Heart left ventricle (tissue), 16 donors: ENCODE measurements at regions of chr1 and their contacts with region 1.

Region 1: DNA sequence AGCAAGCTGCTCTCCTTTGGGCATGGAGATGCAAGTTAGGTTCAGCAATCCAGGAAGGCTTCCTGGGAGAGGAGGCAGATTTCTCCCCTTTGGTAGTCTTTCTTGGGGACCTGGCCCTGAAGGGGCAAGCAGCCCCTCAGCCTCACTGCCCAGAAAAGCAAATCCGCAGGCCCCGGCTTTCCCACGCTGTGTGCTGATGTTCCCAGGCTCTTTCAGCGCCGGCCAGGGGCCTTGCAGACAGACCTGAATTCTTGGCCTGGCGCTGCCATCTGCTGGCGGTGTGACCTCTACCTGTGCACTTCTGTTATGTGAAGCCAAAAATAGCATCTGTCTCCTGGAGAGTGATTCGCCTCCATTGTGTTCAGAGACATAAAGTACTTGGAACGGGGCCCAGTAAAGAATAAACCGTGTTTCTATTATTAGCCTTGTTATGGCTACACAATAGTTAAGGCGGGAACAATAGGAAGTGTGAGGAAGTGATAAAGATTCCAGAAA is 64.8 kb downstream of the ALPL start:
- DNase-seq: peak; percentile 85 to 92 (median 90)
- ATAC-seq: peak; percentile 89 to 94 (median 92)
- H3K4me3 ChIP-seq: peak overlapping the region in 2 of 12 donors; percentile 3 to 11
- H3K27ac ChIP-seq: peak overlapping the region; percentile 68 to 96 (median 82)
- H3K4me1 ChIP-seq: peaks cover 0 to 27% (median 21%) of the 10 kb centered on the region in 12 donors
- H3K27me3 ChIP-seq: peaks cover 0 to 4% (median 0%) of the 10 kb centered on the region in 9 donors
- CTCF ChIP-seq: peak; percentile 46 to 81 (median 66)
- POLR2A ChIP-seq: no peak

Region 2: GRCh38 chr1:21368515-21369289 is 205.3 kb before region 1 on chr1:
- intact Hi-C with region 1: loop called in 8 of 10 experiments (anchors 1 to 5 kb)
- DNase-seq: peak; percentile 80 to 88 (median 83)
- ATAC-seq: peak; percentile 79 to 96 (median 94)
- H3K4me3 ChIP-seq: peak overlapping the region in 1 of 12 donors; percentile 12
- H3K27ac ChIP-seq: peak overlapping the region in 1 of 12 donors; percentile 17
- H3K4me1 ChIP-seq: peaks cover 0 to 12% (median 1%) of the 10 kb centered on the region in 12 donors
- H3K27me3 ChIP-seq: no peaks in the 10 kb centered on the region
- CTCF ChIP-seq: peak; percentile 96 to 100 (median 99)
- POLR2A ChIP-seq: no peak

Region 3: GRCh38 chr1:21378705-21379494 is 195.1 kb before region 1 on chr1:
- intact Hi-C with region 1: loop called in 5 of 10 experiments (anchors 5 kb)
- DNase-seq: no peak
- ATAC-seq: no peak
- H3K4me3 ChIP-seq: no peak overlapping the region
- H3K27ac ChIP-seq: no peak overlapping the region
- H3K4me1 ChIP-seq: no peaks in the 10 kb centered on the region
- H3K27me3 ChIP-seq: peaks cover 0 to 31% (median 0%) of the 10 kb centered on the region in 9 donors
- CTCF ChIP-seq: no peak
- POLR2A ChIP-seq: no peak

Region 4: DNA sequence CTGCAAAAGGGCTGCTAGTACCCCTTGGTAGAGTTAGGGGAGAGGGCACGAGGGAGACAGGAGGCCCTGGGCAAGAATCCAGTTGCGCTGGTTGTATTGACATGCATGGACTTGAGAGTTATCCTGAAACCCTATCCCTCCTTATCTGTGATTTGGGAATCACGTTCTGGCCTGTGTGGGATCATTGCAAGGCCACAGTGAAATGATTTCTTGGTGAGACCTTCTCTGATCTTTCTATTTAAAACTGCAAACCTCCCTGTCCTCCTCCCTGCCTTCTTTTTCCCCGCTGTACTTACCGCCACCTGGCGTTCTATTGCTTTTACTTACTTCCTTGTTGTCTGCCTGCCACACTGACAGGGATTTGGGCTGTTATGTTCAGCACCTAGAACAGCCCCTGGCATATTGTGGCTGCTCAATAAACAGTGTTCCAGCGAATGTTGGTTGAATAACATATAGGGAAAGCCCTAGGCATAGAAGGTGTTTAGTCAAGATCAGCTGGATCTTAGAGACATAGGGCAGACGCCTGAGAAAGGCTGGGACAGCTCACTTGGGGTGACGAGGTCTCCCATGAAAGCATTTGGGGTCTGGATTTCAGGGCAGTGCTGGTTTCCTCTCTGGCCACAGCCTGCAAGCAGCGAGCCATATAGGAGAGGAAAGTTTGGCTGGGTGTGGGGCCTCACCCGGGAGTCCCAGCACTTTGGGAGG is 39.2 kb before region 1 on chr1:
- intact Hi-C with region 1: loop called in 6 of 10 experiments (anchors 1 to 5 kb)
- DNase-seq: peak in 3 of 5 donors; percentile 27 to 43 (median 41)
- ATAC-seq: peak in 1 of 4 donors; percentile 14
- H3K4me3 ChIP-seq: no peak overlapping the region
- H3K27ac ChIP-seq: peak overlapping the region in 1 of 12 donors; percentile 44
- H3K4me1 ChIP-seq: peaks cover 2 to 46% (median 29%) of the 10 kb centered on the region in 12 donors
- H3K27me3 ChIP-seq: peaks cover 0 to 6% (median 0%) of the 10 kb centered on the region in 9 donors
- CTCF ChIP-seq: peak in 11 of 12 donors; percentile 14 to 56 (median 43)
- POLR2A ChIP-seq: no peak